HepG2 (cell line): ENCODE measurements at regions of chr2 and their contacts with region 1.

Region 1: DNA sequence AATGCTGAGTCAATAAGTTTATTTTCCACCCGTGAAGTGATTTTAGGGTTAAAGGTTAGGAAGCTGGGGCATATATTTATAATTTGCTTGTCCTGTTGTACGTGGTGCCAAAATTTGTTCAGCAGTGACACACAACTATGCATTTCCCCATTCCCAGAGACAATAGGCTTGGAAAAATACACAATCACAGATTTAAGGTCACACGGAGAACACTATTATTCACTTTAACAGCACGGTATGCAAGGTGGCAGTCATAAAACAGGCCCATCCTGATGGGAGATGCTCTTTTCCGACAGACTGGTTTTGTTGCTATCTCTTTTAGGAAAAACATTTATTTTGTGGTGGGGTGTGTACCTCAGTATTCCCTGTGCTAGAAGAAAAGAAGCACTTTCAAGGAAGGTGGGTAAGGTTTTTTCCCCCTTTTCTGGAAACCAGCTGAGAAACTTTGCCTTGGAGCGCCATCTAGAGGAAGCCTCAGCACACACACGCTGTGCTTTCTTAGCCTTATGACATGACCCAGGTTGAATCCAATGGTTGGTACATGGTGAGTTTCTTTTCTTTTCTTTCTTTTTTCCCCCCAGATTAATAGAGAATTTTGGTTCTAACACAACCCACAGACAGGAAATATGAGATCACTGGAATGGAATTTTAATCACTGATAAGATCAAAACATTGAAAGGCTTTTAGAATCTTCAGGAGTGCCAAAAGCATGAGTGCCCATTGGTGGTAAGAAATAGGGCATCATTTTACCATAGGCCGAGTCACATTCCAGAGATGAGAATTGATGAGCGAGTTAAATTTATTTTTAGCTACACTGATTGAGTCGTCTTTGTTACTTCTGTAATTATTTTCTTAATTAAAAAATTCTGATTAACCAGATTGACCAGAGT is 332.1 kb downstream of the AGPS start:
- DNase-seq: peak; percentile 47
- ATAC-seq: peak; percentile 94
- H3K4me3 ChIP-seq: no peak overlapping the region
- H3K27ac ChIP-seq: no peak overlapping the region
- H3K4me1 ChIP-seq: peaks cover 11% of the 10 kb centered on the region
- H3K27me3 ChIP-seq: no peaks in the 10 kb centered on the region
- CTCF ChIP-seq: peak; percentile 94
- EP300 ChIP-seq: no peak
- POLR2A ChIP-seq: no peak
- RAD21 ChIP-seq: peak; percentile 82

Region 2: GRCh38 chr2:177225965-177226360 is 498.7 kb before region 1 on chr2:
- CTCF ChIA-PET with region 1: no interaction called
- POLR2A ChIA-PET with region 1: no interaction called
- in situ Hi-C with region 1: no loop called
- intact Hi-C with region 1: no loop called
- DNase-seq: no peak
- ATAC-seq: peak; percentile 0; the same call in 1 of the 3 replicates
- H3K4me3 ChIP-seq: no peak overlapping the region
- H3K27ac ChIP-seq: no peak overlapping the region
- H3K4me1 ChIP-seq: peaks cover 5% of the 10 kb centered on the region
- H3K27me3 ChIP-seq: no peaks in the 10 kb centered on the region
- CTCF ChIP-seq: no peak
- EP300 ChIP-seq: no peak
- POLR2A ChIP-seq: peak in 1 of 2 experiments; percentile 34; a peak in 1 of 4 replicates
- RAD21 ChIP-seq: no peak

Region 3: GRCh38 chr2:177419274-177419673 is 305.4 kb before region 1 on chr2:
- CTCF ChIA-PET with region 1: no interaction called
- POLR2A ChIA-PET with region 1: no interaction called
- in situ Hi-C with region 1: no loop called
- intact Hi-C with region 1: loop called (anchors 2 kb)
- DNase-seq: no peak
- ATAC-seq: no peak
- H3K4me3 ChIP-seq: no peak overlapping the region
- H3K27ac ChIP-seq: no peak overlapping the region
- H3K4me1 ChIP-seq: peaks cover 58% of the 10 kb centered on the region
- H3K27me3 ChIP-seq: no peaks in the 10 kb centered on the region
- CTCF ChIP-seq: no peak
- EP300 ChIP-seq: no peak
- POLR2A ChIP-seq: no peak
- RAD21 ChIP-seq: no peak

Region 4: GRCh38 chr2:177489719-177490301 is 234.8 kb before region 1 on chr2:
- CTCF ChIA-PET with region 1: interaction called, 32 read pairs
- POLR2A ChIA-PET with region 1: no interaction called
- in situ Hi-C with region 1: loop called (anchors 5 kb)
- intact Hi-C with region 1: loop called (anchors 1 kb)
- DNase-seq: peak; percentile 41
- ATAC-seq: peak; percentile 57
- H3K4me3 ChIP-seq: no peak overlapping the region
- H3K27ac ChIP-seq: no peak overlapping the region
- H3K4me1 ChIP-seq: no peaks in the 10 kb centered on the region
- H3K27me3 ChIP-seq: no peaks in the 10 kb centered on the region
- CTCF ChIP-seq: peak; percentile 62
- EP300 ChIP-seq: no peak
- POLR2A ChIP-seq: no peak
- RAD21 ChIP-seq: no peak

Region 5: DNA sequence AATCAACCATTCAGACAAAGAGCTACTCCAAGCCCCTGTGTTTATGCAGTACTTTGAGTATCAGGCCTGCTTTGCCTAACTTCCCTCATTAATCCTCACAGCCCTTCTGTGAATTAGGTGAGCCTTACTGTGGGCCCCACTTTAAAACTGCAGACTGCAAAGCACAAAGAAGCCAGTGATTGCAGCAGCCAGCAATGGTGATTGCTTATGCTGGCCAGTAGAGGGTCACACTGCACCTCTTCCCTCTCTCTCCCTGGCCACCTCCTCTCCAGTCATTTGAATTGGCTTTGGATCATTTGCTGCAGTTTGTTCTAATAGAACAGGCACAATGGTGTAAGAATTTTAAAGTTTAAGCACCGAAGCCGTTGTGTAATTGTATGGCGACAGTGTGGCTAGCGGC is 102.1 kb before region 1 on chr2:
- CTCF ChIA-PET with region 1: interaction called, 3 read pairs
- POLR2A ChIA-PET with region 1: no interaction called
- in situ Hi-C with region 1: loop called (anchors 5 kb)
- intact Hi-C with region 1: loop called (anchors 1 kb)
- DNase-seq: peak; percentile 30
- ATAC-seq: peak; percentile 51
- H3K4me3 ChIP-seq: no peak overlapping the region
- H3K27ac ChIP-seq: no peak overlapping the region
- H3K4me1 ChIP-seq: peaks cover 29% of the 10 kb centered on the region
- H3K27me3 ChIP-seq: no peaks in the 10 kb centered on the region; a peak in 1 of 5 replicates
- CTCF ChIP-seq: peak; percentile 74
- EP300 ChIP-seq: no peak
- POLR2A ChIP-seq: no peak
- RAD21 ChIP-seq: no peak

Region 6: GRCh38 chr2:177662895-177663294 is 61.7 kb before region 1 on chr2:
- CTCF ChIA-PET with region 1: no interaction called
- POLR2A ChIA-PET with region 1: no interaction called
- in situ Hi-C with region 1: no loop called
- intact Hi-C with region 1: no loop called
- DNase-seq: no peak
- ATAC-seq: no peak
- H3K4me3 ChIP-seq: no peak overlapping the region
- H3K27ac ChIP-seq: no peak overlapping the region
- H3K4me1 ChIP-seq: no peaks in the 10 kb centered on the region
- H3K27me3 ChIP-seq: no peaks in the 10 kb centered on the region
- CTCF ChIP-seq: no peak
- EP300 ChIP-seq: no peak
- POLR2A ChIP-seq: no peak
- RAD21 ChIP-seq: no peak